Mammary epithelial cell (primary cell): ENCODE measurements at regions of chr7 and their contacts with region 1.

Region 1: DNA sequence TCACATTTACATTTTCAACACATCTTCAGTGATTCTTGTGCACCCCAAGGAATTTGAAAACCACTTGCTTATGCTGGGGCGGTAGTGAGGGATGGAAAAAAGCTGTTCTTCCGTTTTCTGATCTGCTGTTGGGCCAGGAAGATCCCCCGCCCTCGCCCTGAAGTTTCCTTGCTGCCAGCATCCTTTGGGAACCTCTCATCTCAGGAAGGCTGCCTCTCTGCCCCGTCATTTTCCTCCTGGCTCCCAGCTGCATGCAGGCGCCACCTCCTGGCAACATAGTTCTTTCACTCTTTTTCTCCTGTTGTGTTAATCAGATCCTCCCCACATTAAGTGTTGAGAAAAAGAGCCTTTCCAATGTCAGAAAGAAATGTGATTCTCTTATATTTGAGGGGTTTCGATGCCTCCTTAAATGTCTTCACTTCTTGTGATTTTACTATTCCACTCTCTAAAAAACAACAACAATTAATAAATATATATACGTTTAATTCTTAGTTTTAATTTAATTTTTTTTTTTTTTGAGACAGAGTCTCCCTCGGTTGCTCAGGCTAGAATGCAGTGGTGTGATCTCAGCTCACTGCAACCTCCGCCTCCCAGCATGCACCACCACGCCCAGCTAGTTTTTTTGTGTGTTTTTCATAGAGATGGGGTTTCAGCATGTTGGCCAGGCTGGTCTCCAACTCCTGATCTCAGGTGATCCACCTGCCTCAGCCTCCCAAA is 122.9 kb downstream of the RALA start:
- DNase-seq: peak; percentile 69
- H3K4me3 ChIP-seq: no peak overlapping the region
- H3K27ac ChIP-seq: peak overlapping the region; percentile 29
- H3K4me1 ChIP-seq: peaks cover 41% of the 10 kb centered on the region
- H3K27me3 ChIP-seq: no peaks in the 10 kb centered on the region
- CTCF ChIP-seq: peak; percentile 79 to 89

Region 2: DNA sequence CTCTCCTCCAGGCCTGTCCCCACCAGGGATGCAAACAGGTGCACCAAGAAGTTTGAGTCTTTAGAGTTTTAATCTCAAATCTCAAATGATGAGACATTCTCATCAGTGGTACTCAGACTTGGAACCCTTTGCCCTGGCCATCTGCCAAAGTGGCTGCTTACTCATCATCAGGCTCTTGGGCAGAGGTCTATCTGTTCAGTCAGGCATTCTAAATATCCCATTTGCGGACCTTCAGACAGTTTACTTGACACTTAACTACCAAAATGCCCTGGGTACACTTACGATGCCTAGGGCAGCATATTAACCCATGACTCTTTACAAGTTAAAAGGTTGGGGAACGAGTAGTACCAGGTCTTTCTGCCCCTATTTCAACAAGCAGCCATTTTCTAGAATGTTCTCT is 241.3 kb before region 1 on chr7:
- CTCF ChIA-PET with region 1: no interaction called
- dilution Hi-C with region 1: no loop called
- in situ Hi-C with region 1: no loop called
- intact Hi-C with region 1: no loop called
- DNase-seq: peak; percentile 53
- H3K4me3 ChIP-seq: no peak overlapping the region
- H3K27ac ChIP-seq: no peak overlapping the region
- H3K4me1 ChIP-seq: peaks cover 7% of the 10 kb centered on the region
- H3K27me3 ChIP-seq: peaks cover 2% of the 10 kb centered on the region
- CTCF ChIP-seq: no peak

Region 3: DNA sequence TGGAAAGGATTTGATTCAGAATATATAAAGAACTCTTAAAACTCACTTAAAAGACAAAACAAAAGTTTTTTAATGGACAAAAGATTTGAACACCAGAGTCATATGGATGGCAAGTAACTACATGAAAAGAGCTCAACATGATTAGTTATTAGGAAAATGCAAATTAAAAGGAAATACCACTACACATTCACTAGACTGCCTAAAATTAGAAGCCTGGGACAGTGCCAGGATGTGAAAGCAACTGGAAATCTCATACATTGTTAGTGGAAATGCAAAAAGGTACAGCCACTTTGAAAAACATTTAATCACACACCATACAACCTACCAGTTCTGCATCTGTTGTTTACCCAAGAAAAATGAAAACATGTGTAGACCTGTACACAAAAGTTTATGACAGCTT is 74.1 kb before region 1 on chr7:
- CTCF ChIA-PET with region 1: no interaction called
- dilution Hi-C with region 1: no loop called
- in situ Hi-C with region 1: no loop called
- intact Hi-C with region 1: no loop called
- DNase-seq: no peak
- H3K4me3 ChIP-seq: no peak overlapping the region
- H3K27ac ChIP-seq: no peak overlapping the region
- H3K4me1 ChIP-seq: no peaks in the 10 kb centered on the region
- H3K27me3 ChIP-seq: no peaks in the 10 kb centered on the region
- CTCF ChIP-seq: no peak

Region 4: DNA sequence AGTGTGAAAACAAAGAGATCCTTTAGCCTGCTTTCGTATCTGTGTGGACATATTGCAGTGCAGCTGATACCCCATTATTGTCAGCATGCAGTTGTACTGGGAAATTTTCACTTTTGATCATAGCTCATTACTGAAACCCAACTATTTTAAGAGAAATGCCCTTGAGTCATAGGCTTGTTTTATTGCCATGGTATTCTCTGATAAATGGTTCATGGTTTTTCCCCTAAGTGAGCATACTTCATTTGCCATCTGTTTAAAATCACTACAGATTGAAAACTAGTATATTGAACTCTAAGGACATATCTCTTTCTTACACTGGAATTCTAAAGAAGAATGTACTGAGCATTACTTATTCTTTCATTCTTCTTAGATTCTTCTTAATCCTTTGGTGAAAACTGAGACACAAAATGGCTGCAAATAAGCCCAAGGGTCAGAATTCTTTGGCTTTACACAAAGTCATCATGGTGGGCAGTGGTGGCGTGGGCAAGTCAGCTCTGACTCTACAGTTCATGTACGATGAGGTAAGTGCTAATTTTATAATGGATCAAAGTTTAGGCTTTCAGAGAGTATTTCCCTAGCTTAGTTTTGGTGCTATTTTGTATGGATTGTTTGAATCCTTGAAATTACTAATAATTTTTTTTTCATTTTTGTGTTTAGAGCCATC is 59.9 kb before region 1 on chr7:
- CTCF ChIA-PET with region 1: interaction called, 14 read pairs
- dilution Hi-C with region 1: no loop called
- in situ Hi-C with region 1: no loop called
- intact Hi-C with region 1: no loop called
- DNase-seq: peak; percentile 26
- H3K4me3 ChIP-seq: no peak overlapping the region
- H3K27ac ChIP-seq: no peak overlapping the region
- H3K4me1 ChIP-seq: peaks cover 23% of the 10 kb centered on the region
- H3K27me3 ChIP-seq: no peaks in the 10 kb centered on the region
- CTCF ChIP-seq: no peak

Region 5: GRCh38 chr7:39720574-39720973 is 25.7 kb before region 1 on chr7:
- CTCF ChIA-PET with region 1: no interaction called
- dilution Hi-C with region 1: no loop called
- in situ Hi-C with region 1: no loop called
- intact Hi-C with region 1: loop called (anchors 1 kb)
- DNase-seq: peak; percentile 95
- H3K4me3 ChIP-seq: no peak overlapping the region
- H3K27ac ChIP-seq: peak overlapping the region; percentile 16
- H3K4me1 ChIP-seq: peaks cover 11% of the 10 kb centered on the region
- H3K27me3 ChIP-seq: no peaks in the 10 kb centered on the region
- CTCF ChIP-seq: no peak

Region 6: DNA sequence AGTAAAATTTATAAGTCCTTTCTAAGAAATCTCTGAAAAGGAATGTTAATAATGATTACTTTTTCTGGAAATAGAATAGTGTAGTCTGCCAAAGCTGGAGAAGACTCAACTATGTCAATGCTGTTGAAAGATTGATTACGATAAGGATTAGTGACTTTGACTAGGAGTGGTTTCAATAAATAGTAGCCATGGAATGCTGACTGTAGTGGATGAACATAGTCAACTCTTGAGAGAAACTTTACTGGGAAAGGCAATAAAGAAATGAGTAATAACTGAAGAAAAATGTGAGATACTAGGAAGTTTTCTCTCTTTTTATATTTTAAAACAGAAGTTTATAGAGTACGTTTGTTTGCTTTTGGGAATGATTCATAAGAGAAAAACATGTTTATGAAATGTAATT is 98.7 kb after region 1 on chr7:
- CTCF ChIA-PET with region 1: no interaction called
- dilution Hi-C with region 1: no loop called
- in situ Hi-C with region 1: no loop called
- intact Hi-C with region 1: no loop called
- DNase-seq: no peak
- H3K4me3 ChIP-seq: no peak overlapping the region
- H3K27ac ChIP-seq: no peak overlapping the region
- H3K4me1 ChIP-seq: no peaks in the 10 kb centered on the region
- H3K27me3 ChIP-seq: no peaks in the 10 kb centered on the region
- CTCF ChIP-seq: no peak